ENCODE measurements at regions of chr11 and their contacts with region 1.

Region 1: DNA sequence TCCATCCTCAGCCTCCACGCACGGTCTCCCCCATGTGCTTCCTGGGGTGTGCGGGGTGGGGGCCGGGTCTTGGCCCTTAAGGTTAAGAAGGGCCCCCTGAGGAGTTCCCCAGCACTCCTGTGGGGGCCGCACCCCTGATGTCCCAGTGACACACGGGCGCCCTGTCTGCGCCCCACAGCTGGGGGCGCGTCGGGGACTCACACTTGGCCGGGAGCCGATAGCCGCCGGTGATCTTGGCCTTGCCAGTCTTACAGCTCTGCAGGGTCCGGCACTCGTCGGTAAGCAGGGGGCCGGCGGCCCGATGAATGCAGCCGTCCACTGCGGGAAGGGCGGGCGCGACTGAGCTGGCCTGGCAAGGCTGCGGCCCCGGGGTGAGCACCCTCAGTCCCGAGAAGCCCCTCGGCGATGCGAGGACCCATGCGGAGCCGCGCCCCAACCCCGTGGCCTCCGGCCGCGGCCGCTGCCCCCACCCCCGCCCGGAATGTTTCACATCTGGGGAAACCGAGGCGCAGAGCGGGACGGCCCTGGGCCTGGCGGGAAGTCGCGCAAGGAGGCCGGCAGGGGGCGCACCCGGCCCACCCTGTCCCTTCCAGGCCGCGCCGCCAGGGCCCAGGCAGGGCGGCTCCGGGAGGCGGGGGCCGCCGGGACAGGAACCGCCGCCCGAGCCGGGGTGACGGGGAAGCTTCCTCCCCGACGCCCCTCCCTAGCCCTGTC is 13.9 kb downstream of the OTUB1 start:
- DNase-seq: peak; percentile 66
- H3K4me3 ChIP-seq: peak overlapping the region; percentile 30
- H3K27ac ChIP-seq: no peak overlapping the region
- H3K4me1 ChIP-seq: peaks cover 9% of the 10 kb centered on the region
- H3K27me3 ChIP-seq: no peaks in the 10 kb centered on the region
- CTCF ChIP-seq: peak; percentile 68

Region 2: GRCh38 chr11:64148200-64148916 is 148.2 kb after region 1 on chr11:
- intact Hi-C with region 1: loop called (anchors 1 kb)
- DNase-seq: peak; percentile 72
- H3K4me3 ChIP-seq: no peak overlapping the region
- H3K27ac ChIP-seq: no peak overlapping the region
- H3K4me1 ChIP-seq: no peaks in the 10 kb centered on the region
- H3K27me3 ChIP-seq: no peaks in the 10 kb centered on the region
- CTCF ChIP-seq: peak; percentile 89

Region 3: DNA sequence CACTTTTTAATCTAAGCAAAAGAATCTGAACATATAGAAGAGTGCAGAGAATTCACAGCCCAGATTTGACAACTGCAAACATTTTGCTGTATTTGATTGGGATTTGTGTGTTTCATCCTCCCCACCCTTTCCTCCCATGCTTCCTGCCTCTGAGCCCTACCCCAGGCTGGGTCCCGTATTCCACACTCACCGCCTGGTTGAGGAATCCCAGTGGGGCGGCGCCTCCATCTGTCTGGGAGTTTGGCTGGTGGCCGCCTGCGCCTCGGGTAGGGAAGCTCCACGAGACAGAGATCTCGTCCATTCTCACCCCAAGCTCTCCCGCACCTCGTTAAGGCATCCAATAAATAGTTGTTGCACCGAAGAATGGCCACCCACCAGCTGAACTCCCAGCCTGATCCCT is 484.9 kb after region 1 on chr11:
- intact Hi-C with region 1: no loop called
- DNase-seq: no peak
- H3K4me3 ChIP-seq: no peak overlapping the region
- H3K27ac ChIP-seq: no peak overlapping the region
- H3K4me1 ChIP-seq: no peaks in the 10 kb centered on the region
- H3K27me3 ChIP-seq: no peaks in the 10 kb centered on the region
- CTCF ChIP-seq: no peak